ENCODE measurements at regions of chr10 and their contacts with region 1.

Region 1: GRCh38 chr10:100888796-100889356 is 23.9 kb upstream of the SLF2 start:
- DNase-seq: no peak
- ATAC-seq: no peak
- H3K4me3 Mint-ChIP-seq: no peak overlapping the region
- H3K27ac Mint-ChIP-seq: no peak overlapping the region
- H3K4me1 Mint-ChIP-seq: no peaks in the 10 kb centered on the region
- H3K27me3 Mint-ChIP-seq: peaks cover 50% of the 10 kb centered on the region

Region 2: DNA sequence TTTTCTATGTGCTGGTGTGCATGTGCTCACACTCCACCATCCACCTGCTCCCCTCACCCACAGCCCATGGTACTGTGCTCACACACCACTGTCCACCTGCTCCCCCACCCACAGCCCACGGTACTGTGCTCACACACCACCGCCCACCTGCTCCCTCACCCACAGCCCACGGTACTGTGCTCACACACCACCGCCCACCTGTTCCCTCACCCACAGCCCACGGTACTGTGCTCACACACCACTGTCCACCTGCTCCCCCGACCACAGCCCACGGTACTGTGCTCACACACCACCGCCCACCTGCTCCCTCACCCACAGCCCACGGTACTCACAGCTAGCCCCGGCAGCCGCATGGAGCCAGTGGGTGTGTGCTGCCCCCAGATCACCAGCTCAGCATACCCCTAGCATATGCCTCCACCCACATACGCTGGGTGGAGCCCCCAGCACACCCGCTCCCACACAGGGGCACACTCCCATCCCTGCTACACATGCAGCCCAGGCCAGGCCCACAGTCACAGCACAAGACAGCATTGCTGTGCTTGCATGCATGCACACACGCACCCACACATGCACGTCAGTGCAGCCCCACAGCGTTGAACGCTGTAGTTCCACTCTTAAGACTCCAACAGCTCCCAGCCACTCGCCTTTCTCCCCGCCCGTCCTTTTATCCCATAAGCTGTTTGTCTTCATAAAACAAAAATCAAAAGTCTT is 81.5 kb before region 1 on chr10:
- CTCF ChIA-PET with region 1: no interaction called
- DNase-seq: no peak
- ATAC-seq: no peak
- H3K4me3 Mint-ChIP-seq: no peak overlapping the region
- H3K27ac Mint-ChIP-seq: no peak overlapping the region
- H3K4me1 Mint-ChIP-seq: no peaks in the 10 kb centered on the region
- H3K27me3 Mint-ChIP-seq: peaks cover 53% of the 10 kb centered on the region

Region 3: DNA sequence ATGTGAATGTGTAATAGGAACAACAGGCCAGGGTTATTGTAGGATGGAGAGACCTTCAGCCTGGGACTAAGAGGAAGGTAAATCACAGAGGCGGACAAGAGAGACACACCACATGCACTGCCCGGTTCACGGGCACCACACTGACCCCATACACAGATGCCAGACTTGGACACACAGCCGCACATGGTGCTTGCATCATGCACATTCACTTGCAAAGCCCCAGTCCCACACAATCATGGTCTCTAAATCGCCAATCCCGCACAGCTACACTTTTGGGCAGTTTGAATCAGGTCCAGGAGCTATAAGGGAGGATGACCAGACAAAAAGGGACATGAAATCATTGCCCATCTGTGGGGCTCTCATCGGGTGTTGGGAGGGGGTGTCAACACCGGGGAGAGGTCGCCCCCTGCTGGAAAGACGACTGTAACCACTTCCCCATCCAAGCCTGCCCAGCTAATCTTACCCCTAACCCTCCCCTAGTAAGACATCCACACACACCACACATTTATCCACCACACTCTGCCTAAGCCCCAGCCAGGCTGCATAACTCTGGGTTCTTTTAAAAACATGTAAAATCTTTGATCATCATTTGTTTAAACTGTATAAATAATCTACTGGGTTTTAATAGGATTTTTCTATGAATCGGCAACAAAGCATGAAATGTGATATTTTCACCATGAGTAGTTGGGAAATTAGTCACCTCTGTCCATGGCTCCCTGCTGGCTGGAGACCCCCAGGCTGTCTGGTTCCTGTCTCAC is 16.7 kb before region 1 on chr10:
- CTCF ChIA-PET with region 1: interaction called, 12 read pairs
- DNase-seq: peak; percentile 71
- ATAC-seq: peak; percentile 77
- H3K4me3 Mint-ChIP-seq: no peak overlapping the region
- H3K27ac Mint-ChIP-seq: no peak overlapping the region
- H3K4me1 Mint-ChIP-seq: no peaks in the 10 kb centered on the region
- H3K27me3 Mint-ChIP-seq: peaks cover 11% of the 10 kb centered on the region